Psoas muscle (tissue), 8 donors: ENCODE measurements at regions of chr1 and their contacts with region 1.

Region 1: DNA sequence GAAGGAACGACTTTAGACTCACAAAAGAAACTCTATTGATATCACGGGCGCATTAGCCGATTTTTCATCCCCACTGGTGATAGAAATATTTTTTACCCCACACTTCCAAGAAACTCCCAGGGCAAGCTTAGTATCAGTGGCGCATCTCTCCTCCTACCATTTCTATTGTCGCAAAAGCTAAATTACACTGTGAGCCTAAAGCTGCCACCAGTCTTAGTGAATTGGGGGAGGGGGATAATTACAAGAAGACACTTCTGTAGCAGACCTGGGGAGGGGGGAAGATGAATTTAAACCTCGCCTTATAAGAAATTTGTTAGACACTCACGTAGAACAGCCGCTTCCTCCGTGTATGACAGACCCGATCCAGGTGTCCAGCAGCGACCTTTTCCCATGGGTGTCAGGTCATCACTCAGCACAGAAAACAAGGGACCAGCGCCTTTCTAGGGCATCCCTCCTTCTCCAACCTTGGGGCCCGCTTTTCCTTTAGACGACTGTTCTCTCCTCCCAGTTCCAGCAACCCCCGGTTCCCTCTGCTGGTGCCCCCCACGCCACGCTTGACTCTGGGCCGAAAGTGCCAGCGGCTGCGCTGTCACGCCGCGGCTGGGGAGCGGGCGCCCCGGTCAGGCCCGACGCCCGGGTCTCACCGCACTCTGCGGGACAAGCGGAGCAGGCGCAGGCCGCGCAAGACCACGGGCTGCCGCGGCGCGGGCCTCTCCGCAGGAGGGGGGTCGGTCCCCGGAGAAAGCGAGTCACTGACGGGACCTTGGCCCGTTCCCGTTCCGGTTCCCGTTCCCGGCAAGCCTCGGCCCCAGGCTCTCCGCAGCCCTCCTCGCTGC is 821 bp downstream of the PHC2 start:
- DNase-seq: peak; percentile 37 to 72
- ATAC-seq: peak; percentile 14 to 54 (median 31)
- H3K4me3 ChIP-seq: peak overlapping the region; percentile 91
- H3K27ac ChIP-seq: peak overlapping the region; percentile 89
- H3K4me1 ChIP-seq: peaks cover 33% of the 10 kb centered on the region
- H3K27me3 ChIP-seq: no peaks in the 10 kb centered on the region
- CTCF ChIP-seq: no peak

Region 2: GRCh38 chr1:33392639-33393038 is 37.4 kb before region 1 on chr1:
- intact Hi-C with region 1: loop called in 1 of 2 experiments (anchors 5 kb)
- DNase-seq: no peak
- ATAC-seq: no peak
- H3K4me3 ChIP-seq: no peak overlapping the region
- H3K27ac ChIP-seq: no peak overlapping the region
- H3K4me1 ChIP-seq: peaks cover 24% of the 10 kb centered on the region
- H3K27me3 ChIP-seq: no peaks in the 10 kb centered on the region
- CTCF ChIP-seq: no peak

Region 3: GRCh38 chr1:33410091-33410701 is 19.9 kb before region 1 on chr1:
- intact Hi-C with region 1: loop called in 1 of 2 experiments (anchors 2 kb)
- DNase-seq: no peak
- ATAC-seq: peak; percentile 69 to 89 (median 83)
- H3K4me3 ChIP-seq: no peak overlapping the region
- H3K27ac ChIP-seq: peak overlapping the region; percentile 59
- H3K4me1 ChIP-seq: peaks cover 44% of the 10 kb centered on the region
- H3K27me3 ChIP-seq: no peaks in the 10 kb centered on the region
- CTCF ChIP-seq: no peak